ENCODE measurements at regions of chr12 and their contacts with region 1.

Region 1: GRCh38 chr12:131074221-131075083 is 120.7 kb downstream of the ADGRD1 start:
- DNase-seq: peak in 2 of 10 donors; percentile 20 to 21
- H3K4me3 ChIP-seq: no peak overlapping the region
- H3K27ac ChIP-seq: no peak overlapping the region
- H3K27me3 ChIP-seq: peaks cover 0 to 5% (median 0%) of the 10 kb centered on the region in 45 donors
- CTCF ChIP-seq: no peak

Region 2: DNA sequence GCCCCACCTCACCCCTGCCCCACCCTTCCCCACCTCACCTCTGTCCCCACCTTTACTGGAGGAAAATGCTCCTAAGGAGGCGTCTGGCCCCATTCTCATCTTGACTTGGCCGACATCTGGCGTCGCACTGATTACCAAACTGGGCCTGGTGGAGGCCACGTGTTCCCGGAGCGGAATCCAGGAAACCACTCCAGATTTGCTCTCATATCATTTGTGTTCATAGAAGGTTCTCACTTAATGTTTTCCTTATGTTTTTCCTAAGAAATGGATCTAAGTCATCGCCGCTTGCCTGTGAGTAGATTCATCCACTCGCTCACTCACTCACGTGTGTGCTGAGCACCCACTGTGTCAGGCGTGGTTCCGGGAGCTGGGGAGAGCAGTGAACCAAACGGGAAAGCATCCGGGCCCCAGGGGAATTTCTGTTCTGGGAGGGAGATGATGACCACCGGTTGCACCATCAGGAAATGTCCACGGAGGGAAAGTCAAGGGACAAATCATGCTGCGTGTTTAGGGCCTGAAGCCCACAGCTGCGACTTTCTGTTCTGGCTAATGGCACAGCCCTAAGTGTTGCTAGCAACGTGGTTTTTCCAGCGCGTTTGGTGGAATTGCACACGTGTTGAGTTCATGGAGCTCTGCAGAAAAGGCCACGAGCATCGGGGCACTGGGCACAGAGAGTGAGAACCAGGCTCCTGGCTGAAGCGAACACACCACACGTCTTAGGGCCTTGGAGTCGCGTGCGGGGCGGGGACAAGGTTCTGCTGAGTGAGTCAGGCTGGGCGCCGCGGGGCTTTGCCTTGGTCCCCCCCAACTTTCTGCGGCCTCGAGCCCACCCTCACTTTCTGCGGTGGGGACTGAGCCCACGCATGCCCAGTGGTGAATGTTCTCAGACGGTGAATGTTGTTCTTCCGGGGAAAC is 63.0 kb before region 1 on chr12:
- intact Hi-C with region 1: loop called in 1 of 2 experiments (anchors 5 kb)
- DNase-seq: no peak
- H3K4me3 ChIP-seq: no peak overlapping the region
- H3K27ac ChIP-seq: no peak overlapping the region
- H3K27me3 ChIP-seq: peaks cover 0 to 2% (median 0%) of the 10 kb centered on the region in 45 donors
- CTCF ChIP-seq: no peak

Region 3: GRCh38 chr12:131264625-131265024 is 190.2 kb after region 1 on chr12:
- intact Hi-C with region 1: no loop called
- DNase-seq: no peak
- H3K4me3 ChIP-seq: no peak overlapping the region
- H3K27ac ChIP-seq: no peak overlapping the region
- H3K27me3 ChIP-seq: no peaks in the 10 kb centered on the region
- CTCF ChIP-seq: no peak